ENCODE measurements at regions of chr1 and their contacts with region 1.

Region 1: DNA sequence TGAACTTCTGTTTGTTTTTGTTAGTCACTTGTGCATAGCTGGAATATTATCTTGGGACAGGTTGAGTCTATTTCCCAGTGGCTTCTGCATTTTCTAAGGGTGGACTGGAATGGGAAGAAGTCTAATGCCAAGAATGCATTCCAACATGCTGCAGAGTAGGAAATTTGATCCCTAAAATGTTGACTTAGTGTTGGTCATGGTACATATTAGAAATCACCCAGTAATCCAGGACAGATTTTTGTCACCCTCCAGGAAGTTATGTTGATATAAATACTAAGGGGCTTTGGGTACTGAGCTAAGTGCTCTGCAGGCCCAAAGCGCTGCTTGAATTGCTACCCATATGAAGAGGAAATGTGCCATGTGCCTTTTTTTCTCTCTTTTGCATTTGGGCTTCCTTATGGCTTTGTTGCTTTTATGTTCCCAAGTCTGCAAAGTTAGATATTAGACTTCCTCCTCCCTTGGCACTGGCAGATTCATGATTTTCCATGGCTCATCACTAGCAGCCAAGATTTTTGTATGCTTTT is 10.0 kb downstream of the ARID1A start:
- DNase-seq: no peak
- ATAC-seq: no peak
- H3K4me3 ChIP-seq: peak overlapping the region in 1 of 2 donors; percentile 11
- H3K4me3 Mint-ChIP-seq: peak overlapping the region; percentile 45 to 64 (median 45)
- H3K27ac ChIP-seq: peak overlapping the region; percentile 10
- H3K27ac Mint-ChIP-seq: peak overlapping the region; percentile 41 to 73
- H3K4me1 ChIP-seq: peaks cover 57 to 70% of the 10 kb centered on the region in 2 experiments
- H3K4me1 Mint-ChIP-seq: peaks cover 20 to 47% (median 45%) of the 10 kb centered on the region in 3 donors
- H3K27me3 ChIP-seq: no peaks in the 10 kb centered on the region
- H3K27me3 Mint-ChIP-seq: no peaks in the 10 kb centered on the region

Region 2: DNA sequence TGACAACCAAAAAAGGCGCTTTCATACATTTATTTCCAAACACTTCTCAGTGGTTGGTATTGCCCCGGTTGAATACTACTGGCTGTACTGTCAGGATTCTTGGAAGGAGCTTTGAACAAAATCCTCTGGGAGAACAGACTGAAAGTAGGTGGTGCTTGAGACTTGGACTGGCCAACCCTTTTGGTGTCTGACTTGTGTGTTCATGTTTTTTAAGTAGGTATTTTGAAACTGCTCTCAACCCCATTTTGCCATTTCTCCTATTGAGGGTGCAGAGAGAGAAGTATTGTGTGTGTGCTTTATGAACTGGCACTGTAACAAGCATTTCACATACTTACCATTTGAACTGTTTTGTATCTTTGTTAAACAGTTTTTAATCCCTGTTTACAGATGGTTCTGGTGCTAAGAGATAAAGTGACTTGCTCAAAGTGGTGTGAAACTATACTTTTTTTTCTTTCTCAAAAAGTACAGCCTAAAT is 11.2 kb after region 1 on chr1:
- CTCF ChIA-PET with region 1: interaction called in 1 of 2 experiments, 3 read pairs
- POLR2A ChIA-PET with region 1: interaction called, 3 to 17 read pairs
- DNase-seq: no peak
- ATAC-seq: no peak
- H3K4me3 ChIP-seq: no peak overlapping the region
- H3K4me3 Mint-ChIP-seq: peak overlapping the region in 1 of 3 donors; percentile 34
- H3K27ac ChIP-seq: no peak overlapping the region
- H3K27ac Mint-ChIP-seq: peak overlapping the region; percentile 64 to 89
- H3K4me1 ChIP-seq: peaks cover 39 to 57% of the 10 kb centered on the region in 2 experiments
- H3K4me1 Mint-ChIP-seq: peaks cover 90 to 94% (median 92%) of the 10 kb centered on the region in 3 donors
- H3K27me3 ChIP-seq: no peaks in the 10 kb centered on the region
- H3K27me3 Mint-ChIP-seq: no peaks in the 10 kb centered on the region

Region 3: DNA sequence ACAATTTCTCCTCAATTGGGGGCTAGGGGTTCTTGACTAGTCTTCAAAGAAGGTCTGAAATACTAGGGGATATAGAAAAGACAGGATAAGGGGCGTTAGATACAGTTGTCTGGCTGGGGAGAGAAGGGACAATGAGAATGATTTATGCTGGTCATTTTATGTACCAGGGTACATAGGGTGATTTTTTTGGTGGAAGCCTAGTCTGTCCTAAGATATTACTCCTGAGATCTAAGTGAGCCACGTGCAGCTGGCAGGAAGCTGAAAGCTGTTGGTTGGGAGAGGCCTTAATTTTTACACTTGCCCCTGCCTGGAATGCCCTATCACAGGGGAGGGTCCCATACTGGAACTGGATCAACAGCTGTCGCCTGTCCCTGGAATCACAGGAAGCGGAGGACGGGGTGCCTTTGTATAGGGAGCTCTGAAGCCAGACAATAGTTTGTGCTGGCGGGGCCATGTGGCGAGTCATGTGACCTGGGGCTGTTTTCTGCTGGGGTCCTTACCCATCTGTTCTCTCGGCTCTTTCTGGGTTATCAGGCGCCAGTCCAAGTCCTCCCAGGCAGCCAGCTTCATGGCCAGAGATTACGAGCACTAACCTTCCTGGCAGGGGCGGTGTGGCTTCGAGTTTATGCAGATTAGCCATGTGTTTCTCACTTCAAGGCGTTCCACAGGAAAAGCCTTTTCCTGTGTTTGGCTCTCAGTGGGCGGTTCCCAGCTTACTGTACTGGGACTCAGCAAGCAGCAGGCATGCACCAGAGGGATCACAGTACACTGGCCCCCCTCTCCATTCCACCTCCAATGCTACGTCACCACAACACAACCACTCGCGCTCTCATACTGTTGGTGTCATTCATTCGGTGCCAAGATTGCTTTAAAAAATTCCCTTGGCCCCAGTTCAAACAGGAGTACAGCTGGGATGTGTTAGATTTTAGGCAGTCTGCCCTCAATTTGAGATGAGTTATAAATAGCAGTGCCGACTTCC is 17.5 kb after region 1 on chr1:
- CTCF ChIA-PET with region 1: interaction called, 3 to 17 read pairs
- POLR2A ChIA-PET with region 1: no interaction called
- DNase-seq: peak in 34 of 35 experiments; percentile 2 to 71 (median 28)
- ATAC-seq: peak; percentile 64 to 85 (median 76)
- H3K4me3 ChIP-seq: peak overlapping the region; percentile 6 to 68
- H3K4me3 Mint-ChIP-seq: peak overlapping the region; percentile 8 to 75 (median 49)
- H3K27ac ChIP-seq: peak overlapping the region; percentile 0
- H3K27ac Mint-ChIP-seq: peak overlapping the region; percentile 85 to 88
- H3K4me1 ChIP-seq: peaks cover 65 to 69% of the 10 kb centered on the region in 2 experiments
- H3K4me1 Mint-ChIP-seq: peaks cover 89 to 95% (median 94%) of the 10 kb centered on the region in 3 donors
- H3K27me3 ChIP-seq: no peaks in the 10 kb centered on the region
- H3K27me3 Mint-ChIP-seq: no peaks in the 10 kb centered on the region

Region 4: GRCh38 chr1:26761217-26761616 is 55.4 kb after region 1 on chr1:
- CTCF ChIA-PET with region 1: no interaction called
- POLR2A ChIA-PET with region 1: interaction called in 1 of 2 experiments, 13 read pairs
- DNase-seq: peak in 1 of 35 experiments; percentile 17
- ATAC-seq: no peak
- H3K4me3 ChIP-seq: no peak overlapping the region
- H3K4me3 Mint-ChIP-seq: no peak overlapping the region
- H3K27ac ChIP-seq: no peak overlapping the region
- H3K27ac Mint-ChIP-seq: peak overlapping the region in 1 of 2 donors; percentile 54
- H3K4me1 ChIP-seq: peaks cover 0 to 9% of the 10 kb centered on the region in 2 experiments
- H3K4me1 Mint-ChIP-seq: peaks cover 23 to 31% (median 30%) of the 10 kb centered on the region in 3 donors
- H3K27me3 ChIP-seq: no peaks in the 10 kb centered on the region
- H3K27me3 Mint-ChIP-seq: no peaks in the 10 kb centered on the region